T-cell (primary cell): ENCODE measurements at regions of chr5 and their contacts with region 1.

Region 1: DNA sequence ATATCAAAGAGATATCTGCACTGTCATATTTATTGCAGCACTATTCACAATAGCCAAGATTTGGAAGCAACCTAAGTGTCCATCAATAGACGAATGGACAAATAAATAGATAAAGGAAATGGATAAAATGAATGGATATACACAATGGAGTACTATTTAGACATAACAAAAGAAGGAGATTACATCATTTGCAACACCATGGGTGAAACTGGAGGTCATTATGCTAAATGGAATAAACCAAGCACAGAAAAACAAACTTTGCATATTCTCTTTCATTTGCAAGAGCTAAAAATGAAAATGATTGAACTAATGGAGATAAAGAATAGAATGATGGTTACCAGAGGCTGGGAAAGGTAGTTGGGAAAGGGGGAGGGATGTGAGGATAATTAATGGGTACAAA is 155.0 kb upstream of the PTGER4 start:
- DNase-seq: no peak
- ATAC-seq: no peak
- H3K4me3 ChIP-seq: no peak overlapping the region
- H3K4me3 Mint-ChIP-seq: no peak overlapping the region
- H3K27ac ChIP-seq: no peak overlapping the region
- H3K27ac Mint-ChIP-seq: no peak overlapping the region
- H3K4me1 ChIP-seq: peaks cover 0 to 3% of the 10 kb centered on the region in 2 experiments
- H3K4me1 Mint-ChIP-seq: peaks cover 9 to 14% (median 11%) of the 10 kb centered on the region in 3 donors
- H3K27me3 ChIP-seq: no peaks in the 10 kb centered on the region
- H3K27me3 Mint-ChIP-seq: no peaks in the 10 kb centered on the region

Region 2: DNA sequence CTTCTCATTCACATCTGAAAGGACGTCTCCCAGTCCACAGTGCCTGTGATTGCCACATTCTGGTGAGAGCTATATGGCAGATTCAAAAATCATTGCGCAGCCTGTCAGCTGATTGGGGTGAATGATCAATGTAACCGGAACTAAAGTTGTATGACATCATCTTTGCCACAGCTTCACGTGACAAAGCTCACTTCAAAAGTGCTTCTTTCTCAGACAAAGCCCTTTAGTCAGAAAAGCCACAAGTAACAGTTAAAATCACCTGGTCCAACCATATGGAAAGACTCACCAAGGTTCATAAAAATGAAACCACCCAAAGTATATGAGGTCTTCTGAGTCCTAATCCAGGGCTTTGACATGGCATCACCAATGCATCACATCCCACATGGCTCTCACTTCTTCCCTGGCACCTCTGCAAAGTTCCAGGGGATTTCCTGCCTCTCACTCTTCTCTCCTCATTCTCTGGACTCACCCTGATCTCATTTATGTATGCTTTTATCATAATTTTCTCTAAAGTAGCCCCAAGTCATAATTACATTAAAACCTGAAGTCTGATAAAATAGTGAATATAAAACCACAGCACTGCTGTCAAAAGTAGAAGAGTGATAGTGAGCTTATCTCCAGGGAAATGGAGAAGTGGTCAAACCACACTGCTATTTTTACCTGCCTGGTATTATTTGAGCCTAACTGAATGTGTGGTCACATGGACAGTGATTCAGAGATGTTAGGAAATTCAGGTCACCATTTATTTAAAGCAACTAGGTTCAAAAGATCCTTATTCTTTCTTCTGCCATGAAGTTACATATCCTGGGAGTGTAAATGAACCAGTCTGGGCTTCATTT is 38.0 kb before region 1 on chr5:
- CTCF ChIA-PET with region 1: interaction called in 1 of 2 experiments, 12 read pairs
- POLR2A ChIA-PET with region 1: no interaction called
- DNase-seq: peak in 32 of 35 experiments; percentile 3 to 80 (median 40)
- ATAC-seq: peak; percentile 27 to 86 (median 62)
- H3K4me3 ChIP-seq: no peak overlapping the region
- H3K4me3 Mint-ChIP-seq: peak overlapping the region in 2 of 3 donors; percentile 4 to 10
- H3K27ac ChIP-seq: no peak overlapping the region
- H3K27ac Mint-ChIP-seq: peak overlapping the region; percentile 5 to 63
- H3K4me1 ChIP-seq: peaks cover 0 to 8% of the 10 kb centered on the region in 2 experiments
- H3K4me1 Mint-ChIP-seq: peaks cover 16 to 55% (median 47%) of the 10 kb centered on the region in 3 donors
- H3K27me3 ChIP-seq: no peaks in the 10 kb centered on the region
- H3K27me3 Mint-ChIP-seq: no peaks in the 10 kb centered on the region